Posterior vena cava (tissue), 2 donors: ENCODE measurements at regions of chr4 and their contacts with region 1.

Region 1: DNA sequence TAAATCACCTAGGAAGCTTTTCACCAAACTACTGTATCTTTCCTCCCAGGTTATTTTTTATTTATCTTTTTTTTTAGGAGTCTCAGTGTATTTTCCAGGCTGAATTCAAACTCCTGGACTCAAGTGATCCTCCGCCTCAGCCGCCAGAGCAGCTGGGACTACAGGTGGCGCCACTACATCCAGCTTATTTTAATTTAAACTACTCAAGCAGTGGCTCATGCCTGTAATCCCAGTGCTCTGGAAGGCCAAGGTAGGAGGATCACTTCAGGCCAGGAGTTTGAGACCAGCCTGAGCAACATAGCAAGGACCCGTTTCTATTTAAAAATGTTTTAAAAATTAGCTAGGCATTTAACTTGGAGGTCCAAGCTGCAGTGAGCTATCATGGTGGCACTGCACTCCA is 37.8 kb downstream of the LEF1 start:
- DNase-seq: no peak

Region 2: DNA sequence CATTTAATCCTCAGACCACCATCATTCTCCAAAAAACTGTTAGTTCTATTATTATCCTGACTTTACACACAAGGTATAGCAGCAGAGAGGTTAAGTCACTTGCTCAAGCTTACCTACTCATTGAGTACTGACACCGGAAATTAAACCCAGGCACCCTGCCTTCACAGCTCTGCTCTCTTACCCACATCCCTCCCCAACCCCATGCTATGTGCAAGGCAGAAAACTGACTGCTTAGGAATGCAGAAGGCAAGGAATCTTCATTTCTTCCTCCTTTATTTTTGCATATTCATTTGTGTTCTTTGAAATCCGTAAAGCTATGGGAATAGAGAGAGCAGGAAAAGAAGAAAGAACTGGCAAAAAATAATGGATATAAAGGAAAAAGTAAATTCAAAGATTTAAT is 672.8 kb before region 1 on chr4:
- intact Hi-C with region 1: loop called in 1 of 2 experiments (anchors 5 kb)
- DNase-seq: no peak

Region 3: GRCh38 chr4:108087293-108087967 is 43.5 kb before region 1 on chr4:
- intact Hi-C with region 1: no loop called
- DNase-seq: no peak

Region 4: DNA sequence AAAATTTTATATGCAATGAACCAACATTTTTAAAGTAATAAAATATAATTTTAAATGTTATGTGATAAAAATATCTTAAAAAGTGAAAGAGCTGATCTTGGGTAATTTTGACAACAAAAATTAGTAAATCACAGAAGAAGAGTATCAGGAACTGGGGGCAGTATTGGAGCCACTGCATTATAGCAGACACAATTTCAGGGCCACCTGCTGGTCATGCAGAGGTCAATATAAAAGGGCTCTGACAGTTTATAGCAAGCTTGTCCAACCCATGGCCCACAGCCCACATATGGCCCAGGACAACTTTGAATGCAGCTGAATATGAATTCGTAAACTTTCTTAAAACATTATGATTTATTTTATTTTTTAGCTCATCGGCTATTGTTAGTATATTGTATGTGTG is 50.8 kb after region 1 on chr4:
- intact Hi-C with region 1: no loop called
- DNase-seq: no peak